Body of pancreas (tissue), 4 donors: ENCODE measurements at regions of chr11 and their contacts with region 1.

Region 1: GRCh38 chr11:118807800-118808778 is 17.1 kb upstream of the DDX6 start:
- DNase-seq: no peak
- ATAC-seq: no peak
- H3K4me3 ChIP-seq: no peak overlapping the region
- H3K27ac ChIP-seq: no peak overlapping the region
- H3K4me1 ChIP-seq: peaks cover 10% of the 10 kb centered on the region
- H3K27me3 ChIP-seq: no peaks in the 10 kb centered on the region
- CTCF ChIP-seq: no peak
- POLR2A ChIP-seq: no peak

Region 2: GRCh38 chr11:118895142-118896039 is 87.3 kb after region 1 on chr11:
- intact Hi-C with region 1: loop called (anchors 10 kb)
- DNase-seq: peak in 1 of 4 donors; percentile 20
- ATAC-seq: no peak
- H3K4me3 ChIP-seq: no peak overlapping the region
- H3K27ac ChIP-seq: no peak overlapping the region
- H3K4me1 ChIP-seq: peaks cover 24% of the 10 kb centered on the region
- H3K27me3 ChIP-seq: no peaks in the 10 kb centered on the region
- CTCF ChIP-seq: no peak
- POLR2A ChIP-seq: no peak

Region 3: GRCh38 chr11:119759324-119759723 is 951.2 kb after region 1 on chr11:
- intact Hi-C with region 1: no loop called
- DNase-seq: no peak
- ATAC-seq: no peak
- H3K4me3 ChIP-seq: no peak overlapping the region
- H3K27ac ChIP-seq: no peak overlapping the region
- H3K4me1 ChIP-seq: peaks cover 12% of the 10 kb centered on the region
- H3K27me3 ChIP-seq: no peaks in the 10 kb centered on the region
- CTCF ChIP-seq: no peak
- POLR2A ChIP-seq: no peak